ENCODE measurements at regions of chr3 and their contacts with region 1.

Region 1: GRCh38 chr3:124032648-124033359 is 40.9 kb upstream of the ROPN1 start:
- DNase-seq: peak; percentile 21 to 52 (median 24)
- H3K4me3 ChIP-seq: no peak overlapping the region
- H3K4me3 Mint-ChIP-seq: peak overlapping the region; percentile 63 to 87 (median 73)
- H3K27ac ChIP-seq: no peak overlapping the region
- H3K27ac Mint-ChIP-seq: peak overlapping the region in 2 of 8 donors; percentile 8 to 91
- H3K4me1 ChIP-seq: no peaks in the 10 kb centered on the region
- H3K4me1 Mint-ChIP-seq: peaks cover 12 to 21% (median 16%) of the 10 kb centered on the region in 3 donors
- H3K27me3 ChIP-seq: peaks cover 44% of the 10 kb centered on the region
- H3K27me3 Mint-ChIP-seq: peaks cover 30 to 36% of the 10 kb centered on the region in 2 donors

Region 2: DNA sequence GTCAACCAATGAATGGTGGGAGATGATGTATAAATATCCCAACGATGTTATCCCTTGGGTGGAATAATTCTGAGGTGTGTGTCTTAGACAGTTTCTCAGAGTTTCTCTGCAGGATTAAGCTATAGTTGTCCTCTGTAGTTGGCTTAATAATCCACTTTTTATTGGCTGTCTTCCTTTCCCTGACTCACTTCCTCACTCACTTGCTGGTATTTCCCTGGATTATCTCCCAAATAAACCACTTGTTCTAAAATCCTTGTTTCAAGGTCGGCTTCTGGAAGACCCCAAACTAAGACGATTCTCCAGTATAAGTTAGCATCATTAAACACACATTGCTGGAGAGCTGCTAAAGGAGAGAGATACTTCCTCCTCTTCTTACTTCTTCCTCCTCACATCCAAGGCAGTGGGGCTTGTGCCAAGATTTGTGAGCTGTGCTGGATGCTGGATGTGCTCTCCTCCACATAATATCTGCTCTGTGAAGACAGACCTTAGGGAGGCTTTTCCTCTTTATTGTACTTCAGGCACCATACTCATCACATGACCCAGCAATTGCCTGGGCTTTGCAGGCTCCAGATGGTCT is 18.4 kb before region 1 on chr3:
- CTCF ChIA-PET with region 1: interaction called, 11 read pairs
- POLR2A ChIA-PET with region 1: no interaction called
- DNase-seq: no peak
- H3K4me3 ChIP-seq: no peak overlapping the region
- H3K4me3 Mint-ChIP-seq: no peak overlapping the region
- H3K27ac ChIP-seq: no peak overlapping the region
- H3K27ac Mint-ChIP-seq: no peak overlapping the region
- H3K4me1 ChIP-seq: no peaks in the 10 kb centered on the region
- H3K4me1 Mint-ChIP-seq: no peaks in the 10 kb centered on the region
- H3K27me3 ChIP-seq: no peaks in the 10 kb centered on the region
- H3K27me3 Mint-ChIP-seq: peaks cover 22 to 57% of the 10 kb centered on the region in 2 donors

Measured in CD8-positive, alpha-beta memory T cell (primary cell).